Posterior cingulate gyrus (tissue), 11 donors: ENCODE measurements at regions of chr22 and their contacts with region 1.

Region 1: DNA sequence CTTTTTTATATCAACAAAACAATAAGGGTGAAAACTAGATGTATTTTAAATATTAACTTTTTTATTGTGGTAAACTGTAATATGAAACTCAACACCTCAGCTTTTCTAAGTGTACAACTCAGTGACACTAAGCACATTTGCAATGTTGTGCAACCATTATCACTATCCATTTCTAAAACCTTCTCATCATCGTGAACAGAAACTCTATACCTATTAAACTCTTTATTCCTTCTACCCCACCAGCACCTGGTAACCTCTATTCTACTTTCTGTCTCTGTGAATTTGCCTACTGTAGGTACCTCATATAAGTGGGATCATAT is 9.4 kb downstream of the HORMAD2 start:
- DNase-seq: no peak

Region 2: GRCh38 chr22:29635734-29636357 is 453.8 kb before region 1 on chr22:
- intact Hi-C with region 1: loop called (anchors 1 kb)
- DNase-seq: no peak

Region 3: GRCh38 chr22:29689880-29690213 is 399.8 kb before region 1 on chr22:
- intact Hi-C with region 1: loop called (anchors 2 kb)
- DNase-seq: peak; percentile 74 to 97 (median 84)

Region 4: GRCh38 chr22:29883045-29883774 is 206.4 kb before region 1 on chr22 and contains the start of gene MTMR3:
- intact Hi-C with region 1: no loop called
- DNase-seq: peak; percentile 85 to 99 (median 92)

Region 5: DNA sequence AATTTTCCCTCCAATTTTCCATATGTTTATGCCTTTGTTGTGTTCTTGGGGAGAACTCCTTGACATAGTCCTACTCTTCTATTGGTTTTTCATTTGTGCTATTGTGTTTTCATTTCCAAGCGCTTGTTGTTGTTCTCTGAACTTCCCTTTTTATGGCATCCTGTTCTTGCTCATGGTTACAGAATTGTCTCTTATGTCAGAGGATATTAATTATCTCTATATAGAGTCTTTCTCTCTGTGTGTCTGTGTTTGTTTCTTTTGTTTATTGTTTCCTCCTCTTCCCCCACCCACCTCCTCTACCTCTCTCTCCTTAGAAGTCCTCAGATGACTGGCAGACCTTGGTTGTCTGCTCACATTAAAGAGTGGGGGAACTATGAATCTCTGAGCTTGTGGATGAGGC is 60.6 kb after region 1 on chr22:
- intact Hi-C with region 1: no loop called
- DNase-seq: no peak